ENCODE measurements at regions of chr4 and their contacts with region 1.

Region 1: GRCh38 chr4:16916719-16917337 is 18.4 kb upstream of the LDB2 start:
- DNase-seq: peak; percentile 71
- H3K4me3 ChIP-seq: no peak overlapping the region
- H3K27ac ChIP-seq: no peak overlapping the region
- H3K4me1 ChIP-seq: no peaks in the 10 kb centered on the region
- CTCF ChIP-seq: peak; percentile 96

Region 2: DNA sequence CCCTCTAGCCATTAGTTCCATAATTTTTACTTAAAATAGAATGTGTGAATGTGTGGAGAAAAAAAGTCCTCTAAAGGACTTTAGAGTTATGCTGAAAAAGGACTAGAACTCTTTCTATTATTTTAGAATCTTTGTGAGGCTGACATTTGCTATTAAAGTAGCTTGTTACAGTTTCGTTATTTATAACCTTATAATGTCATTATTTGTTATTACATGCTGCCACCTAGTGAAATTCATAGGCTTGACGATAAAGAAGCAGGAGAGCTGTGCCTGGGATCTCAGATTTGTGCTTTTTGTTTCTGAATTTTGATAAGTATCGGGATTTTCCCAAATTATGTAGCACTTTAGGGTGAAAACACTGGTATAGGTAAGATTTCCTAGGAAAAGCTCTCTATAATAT is 652.0 kb before region 1 on chr4:
- CTCF ChIA-PET with region 1: no interaction called
- POLR2A ChIA-PET with region 1: no interaction called
- intact Hi-C with region 1: no loop called
- DNase-seq: peak; percentile 76
- H3K4me3 ChIP-seq: no peak overlapping the region
- H3K27ac ChIP-seq: no peak overlapping the region
- H3K4me1 ChIP-seq: peaks cover 36% of the 10 kb centered on the region
- CTCF ChIP-seq: peak; percentile 93

Region 3: DNA sequence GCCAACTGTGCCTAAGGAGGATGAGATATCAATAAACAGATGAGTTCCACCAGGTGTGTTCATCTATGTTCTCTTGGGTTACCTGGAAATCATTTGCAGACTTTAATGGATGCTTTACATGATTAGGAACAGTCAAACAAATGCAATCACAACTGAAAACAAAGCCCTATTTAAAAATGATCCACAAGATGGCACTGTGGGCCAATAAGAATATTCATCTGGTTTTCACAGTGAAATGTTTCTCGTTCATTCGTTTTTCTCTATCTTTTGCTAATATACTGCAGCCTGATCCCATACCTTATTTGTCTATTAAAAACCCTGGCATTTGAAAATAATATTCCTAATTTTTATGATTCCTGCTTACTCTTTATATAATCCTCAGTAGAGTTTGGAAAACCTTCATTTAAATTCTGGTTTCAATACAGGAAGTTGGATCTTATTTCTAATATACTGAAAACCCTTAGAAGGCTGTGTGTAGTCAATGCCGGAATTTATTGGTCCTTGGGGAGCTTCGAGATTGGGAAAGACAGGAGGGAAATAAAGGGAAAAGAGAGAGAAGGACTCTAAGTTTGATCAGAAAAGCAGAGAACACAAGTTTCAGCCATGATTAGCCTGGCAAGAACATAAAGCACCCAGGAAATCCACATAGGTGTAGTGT is 626.8 kb before region 1 on chr4:
- CTCF ChIA-PET with region 1: no interaction called
- POLR2A ChIA-PET with region 1: no interaction called
- intact Hi-C with region 1: loop called (anchors 10 kb)
- DNase-seq: peak; percentile 36
- H3K4me3 ChIP-seq: no peak overlapping the region
- H3K27ac ChIP-seq: no peak overlapping the region
- H3K4me1 ChIP-seq: no peaks in the 10 kb centered on the region
- CTCF ChIP-seq: peak; percentile 90

Measured in OCI-LY7 (cell line).